Activated CD4-positive, alpha-beta T cell treated with anti-CD3 and anti-CD28 coated beads for 36 hours (primary cell): ENCODE measurements at regions of chr16 and their contacts with region 1.

Region 1: GRCh38 chr16:50548125-50548908 is at the start of gene NKD1:
- DNase-seq: peak; percentile 87
- ATAC-seq: peak; percentile 84
- H3K4me3 Mint-ChIP-seq: peak within 1 kb of the TSS; percentile 81
- H3K27ac Mint-ChIP-seq: no peak within 1 kb of the TSS
- H3K4me1 Mint-ChIP-seq: peaks cover 28% of the 10 kb centered on the region
- H3K27me3 Mint-ChIP-seq: no peaks in the 10 kb centered on the region
- total RNA-seq, gene NKD1: 1.8 to 3.1 TPM

Region 2: DNA sequence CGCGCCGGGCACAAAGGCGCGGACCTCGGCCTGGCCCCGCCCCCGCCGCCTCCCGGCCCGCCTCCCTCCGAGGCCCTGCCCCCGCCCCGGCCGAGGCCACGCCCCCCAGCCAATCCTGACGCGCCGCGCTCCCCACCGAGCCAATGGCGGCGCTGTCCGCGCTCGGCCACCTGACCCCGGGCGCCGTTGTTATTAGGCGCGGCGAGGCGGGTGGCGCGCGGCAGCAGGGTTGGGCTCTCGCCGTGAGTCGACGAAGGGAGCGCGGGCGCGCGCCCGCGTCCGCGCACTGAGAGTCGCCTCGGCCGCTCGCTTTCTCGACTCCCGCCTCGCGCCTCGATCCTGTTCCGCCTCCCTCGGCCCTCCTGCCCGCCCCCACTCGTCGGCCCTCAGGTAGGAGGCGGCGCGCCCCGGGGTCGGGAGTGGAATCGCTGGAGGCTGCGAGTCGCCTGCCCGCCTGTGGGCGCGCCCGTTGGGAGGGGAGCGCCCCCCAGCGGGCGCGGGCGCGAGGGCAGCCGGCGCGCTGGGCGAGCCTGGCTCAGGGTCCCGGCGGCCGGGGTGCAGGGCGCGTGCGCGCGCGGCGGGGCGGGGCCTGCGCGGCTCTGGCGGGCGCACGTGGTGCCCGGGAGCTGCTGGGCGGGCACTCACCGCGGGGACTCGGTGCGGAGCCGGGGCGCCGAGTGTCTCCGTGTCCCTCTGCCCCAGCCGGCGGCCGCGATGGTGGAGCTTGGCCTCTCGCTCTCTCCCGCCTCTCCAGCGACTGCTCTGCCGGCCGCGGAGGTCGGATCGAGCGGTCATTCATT is 1266.3 kb before region 1 on chr16:
- CTCF ChIA-PET with region 1: no interaction called
- POLR2A ChIA-PET with region 1: no interaction called
- intact Hi-C with region 1: loop called in 1 of 2 experiments (anchors 5 kb)
- DNase-seq: peak; percentile 92
- ATAC-seq: peak; percentile 94
- H3K4me3 Mint-ChIP-seq: peak overlapping the region; percentile 56
- H3K27ac Mint-ChIP-seq: no peak overlapping the region
- H3K4me1 Mint-ChIP-seq: peaks cover 11% of the 10 kb centered on the region
- H3K27me3 Mint-ChIP-seq: peaks cover 61% of the 10 kb centered on the region

Region 3: DNA sequence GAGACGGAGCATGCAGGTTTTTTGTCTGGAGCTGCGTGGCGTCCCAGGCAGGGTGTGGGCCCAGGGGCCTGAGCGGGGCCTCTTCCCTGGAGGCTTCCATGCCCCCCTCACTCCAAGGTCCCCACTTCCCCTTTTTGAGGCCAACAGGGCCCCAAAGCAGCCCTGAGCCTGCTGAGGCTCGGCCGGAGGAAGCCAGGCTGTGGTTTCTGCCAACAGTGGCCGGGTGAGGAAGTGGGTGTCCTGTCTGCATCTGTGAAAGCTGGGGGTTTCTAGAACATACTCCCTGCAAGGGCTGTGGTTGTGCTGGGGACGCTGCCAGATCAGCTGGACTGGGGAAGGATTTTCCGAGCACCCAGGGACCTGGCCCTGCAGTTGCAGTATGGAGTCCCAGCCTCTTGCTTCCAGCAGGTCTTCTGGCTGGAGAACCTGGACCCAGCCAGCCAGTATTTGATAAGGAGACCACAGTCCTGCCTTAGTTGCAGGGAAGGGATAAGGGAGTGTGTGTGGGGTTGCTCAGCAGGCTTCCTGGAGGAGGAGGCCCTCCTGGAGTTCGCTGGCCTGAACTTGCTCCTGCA is 266.3 kb before region 1 on chr16:
- CTCF ChIA-PET with region 1: no interaction called
- POLR2A ChIA-PET with region 1: no interaction called
- intact Hi-C with region 1: loop called in 1 of 2 experiments (anchors 2 kb)
- DNase-seq: peak; percentile 67
- ATAC-seq: peak; percentile 21
- H3K4me3 Mint-ChIP-seq: peak overlapping the region; percentile 43
- H3K27ac Mint-ChIP-seq: peak overlapping the region; percentile 55
- H3K4me1 Mint-ChIP-seq: peaks cover 92% of the 10 kb centered on the region
- H3K27me3 Mint-ChIP-seq: no peaks in the 10 kb centered on the region

Region 4: DNA sequence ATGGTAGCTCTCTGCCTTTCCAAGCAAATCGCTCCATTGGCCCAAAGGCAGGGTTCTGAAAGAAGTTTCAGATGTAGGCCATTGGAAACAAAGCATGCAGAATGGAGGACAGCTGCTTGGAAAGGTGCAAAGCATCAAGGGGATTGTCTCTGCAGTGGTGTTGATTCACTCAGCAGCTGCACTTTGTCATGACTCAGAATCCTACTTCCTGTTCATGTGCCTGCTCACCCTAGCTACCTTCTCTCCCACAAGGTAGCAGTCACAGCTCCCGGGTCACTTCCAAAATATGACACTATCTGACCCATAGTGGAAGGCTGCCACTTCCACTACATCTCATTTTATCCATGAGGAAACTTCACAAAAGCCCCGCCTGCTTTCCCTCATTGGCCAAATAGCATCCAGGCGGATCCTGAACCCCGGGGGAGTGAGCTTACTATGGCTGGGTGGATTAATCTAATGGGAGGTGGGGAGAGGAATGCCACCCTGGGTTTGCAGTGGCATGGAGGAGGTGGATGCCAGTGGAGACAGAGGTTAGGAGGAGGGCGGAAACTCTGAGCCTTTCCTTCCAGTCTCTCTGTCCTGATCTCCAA is 74.9 kb before region 1 on chr16:
- CTCF ChIA-PET with region 1: no interaction called
- POLR2A ChIA-PET with region 1: no interaction called
- intact Hi-C with region 1: loop called in 1 of 2 experiments (anchors 1 kb)
- DNase-seq: peak; percentile 54
- ATAC-seq: peak; percentile 82
- H3K4me3 Mint-ChIP-seq: no peak overlapping the region
- H3K27ac Mint-ChIP-seq: peak overlapping the region; percentile 55
- H3K4me1 Mint-ChIP-seq: peaks cover 26% of the 10 kb centered on the region
- H3K27me3 Mint-ChIP-seq: peaks cover 3% of the 10 kb centered on the region

Region 5: DNA sequence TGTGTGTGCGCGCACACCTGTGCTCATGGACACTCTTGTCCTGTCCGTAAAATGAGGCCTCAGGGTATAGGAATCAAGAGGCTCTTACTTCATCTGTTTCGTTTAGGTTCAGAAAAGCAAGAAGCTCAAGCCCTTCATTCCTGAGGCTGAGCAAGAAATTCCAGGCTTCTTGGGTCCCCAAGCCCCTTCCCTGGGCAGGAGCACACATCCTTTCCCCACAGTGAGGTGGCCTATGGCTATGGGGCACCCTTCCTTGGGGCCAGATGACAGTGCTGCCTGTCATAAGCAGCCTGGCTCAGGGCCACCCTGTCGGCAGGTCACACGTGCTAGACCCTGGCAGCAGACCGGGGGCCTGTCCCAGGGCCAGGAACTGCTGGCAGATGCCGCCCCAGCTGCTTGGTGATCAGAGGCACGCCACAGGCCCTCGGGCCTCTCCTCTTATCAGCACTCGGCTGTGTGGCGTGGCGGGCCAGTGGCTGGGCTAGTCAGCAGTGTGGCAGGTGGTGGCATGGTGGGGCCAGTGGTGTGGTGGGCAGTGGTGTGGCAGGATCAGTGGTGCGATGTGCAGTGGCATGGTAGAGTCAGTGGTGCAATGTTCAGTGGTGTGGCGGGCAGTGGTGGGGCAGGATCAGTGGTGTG is 50.1 kb after region 1 on chr16:
- CTCF ChIA-PET with region 1: no interaction called
- POLR2A ChIA-PET with region 1: no interaction called
- intact Hi-C with region 1: no loop called
- DNase-seq: no peak
- ATAC-seq: no peak
- H3K4me3 Mint-ChIP-seq: no peak overlapping the region
- H3K27ac Mint-ChIP-seq: no peak overlapping the region
- H3K4me1 Mint-ChIP-seq: peaks cover 42% of the 10 kb centered on the region
- H3K27me3 Mint-ChIP-seq: no peaks in the 10 kb centered on the region

Region 6: DNA sequence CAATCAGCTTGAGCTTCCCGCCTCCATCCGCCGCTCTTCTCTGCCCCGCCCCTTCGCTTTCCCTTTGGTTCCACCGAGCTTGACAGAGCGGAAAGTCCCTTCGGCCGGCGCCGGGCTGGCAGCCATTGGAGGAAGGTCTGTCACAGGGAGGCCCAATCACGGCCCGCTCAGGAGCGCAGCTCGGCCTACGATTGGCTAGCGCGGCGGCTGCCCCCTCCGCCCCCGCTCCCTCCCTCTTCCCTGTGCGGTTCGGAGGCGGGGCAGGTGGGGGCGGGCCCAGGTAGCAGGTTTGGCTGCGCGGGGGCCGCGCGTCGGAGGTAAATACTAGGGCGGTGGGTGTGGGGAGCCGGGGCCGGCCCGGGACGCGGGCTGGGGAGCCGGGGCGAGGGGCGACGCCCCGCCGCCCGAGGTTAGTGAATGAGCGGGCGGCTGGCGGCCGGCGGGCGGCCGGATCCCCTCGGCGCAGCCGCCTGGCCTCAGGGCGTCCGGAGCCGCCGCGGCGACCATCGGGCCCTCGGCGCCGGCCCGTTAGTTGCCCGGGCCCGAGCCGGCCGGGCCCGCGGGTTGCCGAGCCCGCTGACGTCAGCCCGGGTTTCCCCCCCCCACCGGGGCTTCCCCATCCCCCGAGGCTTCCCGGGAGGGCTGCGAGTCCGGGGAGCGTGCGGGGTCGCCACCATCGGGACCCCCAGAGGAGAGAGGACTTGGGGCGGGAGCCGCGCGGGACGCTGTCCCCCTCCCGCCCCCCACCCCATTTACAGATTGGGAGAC is 193.7 kb after region 1 on chr16 and contains the start of gene CYLD:
- CTCF ChIA-PET with region 1: no interaction called
- POLR2A ChIA-PET with region 1: no interaction called
- intact Hi-C with region 1: loop called (anchors 1 to 5 kb)
- DNase-seq: peak; percentile 100
- ATAC-seq: peak; percentile 91
- H3K4me3 Mint-ChIP-seq: peak within 1 kb of the TSS; percentile 93
- H3K27ac Mint-ChIP-seq: peak within 1 kb of the TSS; percentile 95
- H3K4me1 Mint-ChIP-seq: peaks cover 42% of the 10 kb centered on the region
- H3K27me3 Mint-ChIP-seq: no peaks in the 10 kb centered on the region
- total RNA-seq, gene CYLD: 72.4 to 92.8 TPM

Region 7: GRCh38 chr16:50861970-50862411 is 313.7 kb after region 1 on chr16:
- CTCF ChIA-PET with region 1: no interaction called
- POLR2A ChIA-PET with region 1: no interaction called
- intact Hi-C with region 1: no loop called
- DNase-seq: no peak
- ATAC-seq: no peak
- H3K4me3 Mint-ChIP-seq: no peak overlapping the region
- H3K27ac Mint-ChIP-seq: no peak overlapping the region
- H3K4me1 Mint-ChIP-seq: no peaks in the 10 kb centered on the region
- H3K27me3 Mint-ChIP-seq: peaks cover 3% of the 10 kb centered on the region